HEK293 (cell line): ENCODE measurements at regions of chr2 and their contacts with region 1.

Region 1: GRCh38 chr2:176370467-176371171 is 101.4 kb downstream of the MTX2 start:
- H3K4me3 ChIP-seq: no peak overlapping the region
- H3K27ac ChIP-seq: no peak overlapping the region
- H3K4me1 ChIP-seq: peaks cover 2% of the 10 kb centered on the region; the same call in 1 of the 2 replicates
- CTCF ChIP-seq: no peak

Region 2: GRCh38 chr2:176237456-176237855 is 133.2 kb before region 1 on chr2:
- CTCF ChIA-PET with region 1: interaction called, 11 read pairs
- POLR2A ChIA-PET with region 1: no interaction called
- H3K4me3 ChIP-seq: no peak overlapping the region
- H3K27ac ChIP-seq: no peak overlapping the region
- H3K4me1 ChIP-seq: no peaks in the 10 kb centered on the region
- CTCF ChIP-seq: no peak